CD4-positive, alpha-beta memory T cell (primary cell): ENCODE measurements at regions of chr15 and their contacts with region 1.

Region 1: GRCh38 chr15:45402162-45402954 is 24.0 kb upstream of the GATM start:
- DNase-seq: peak; percentile 91 to 97 (median 96)
- H3K4me3 ChIP-seq: peak overlapping the region; percentile 71 to 77
- H3K4me3 Mint-ChIP-seq: peak overlapping the region; percentile 91 to 99 (median 95)
- H3K27ac ChIP-seq: peak overlapping the region; percentile 89
- H3K27ac Mint-ChIP-seq: peak overlapping the region; percentile 97 to 99 (median 98)
- H3K4me1 ChIP-seq: peaks cover 32% of the 10 kb centered on the region
- H3K4me1 Mint-ChIP-seq: peaks cover 20 to 41% (median 32%) of the 10 kb centered on the region in 4 donors
- H3K27me3 ChIP-seq: no peaks in the 10 kb centered on the region
- H3K27me3 Mint-ChIP-seq: no peaks in the 10 kb centered on the region

Region 2: GRCh38 chr15:45126535-45127158 is 275.7 kb before region 1 on chr15:
- CTCF ChIA-PET with region 1: interaction called, 6 read pairs
- POLR2A ChIA-PET with region 1: interaction called, 3 read pairs
- intact Hi-C with region 1: loop called (anchors 1 kb)
- DNase-seq: peak in 4 of 5 donors; percentile 45 to 52 (median 48)
- H3K4me3 ChIP-seq: no peak overlapping the region
- H3K4me3 Mint-ChIP-seq: no peak overlapping the region
- H3K27ac ChIP-seq: no peak overlapping the region
- H3K27ac Mint-ChIP-seq: no peak overlapping the region
- H3K4me1 ChIP-seq: no peaks in the 10 kb centered on the region
- H3K4me1 Mint-ChIP-seq: peaks cover 0 to 8% (median 4%) of the 10 kb centered on the region in 4 donors
- H3K27me3 ChIP-seq: peaks cover 25% of the 10 kb centered on the region
- H3K27me3 Mint-ChIP-seq: peaks cover 34 to 51% of the 10 kb centered on the region in 2 donors

Region 3: GRCh38 chr15:45139276-45139741 is 263.0 kb before region 1 on chr15:
- CTCF ChIA-PET with region 1: no interaction called
- POLR2A ChIA-PET with region 1: no interaction called
- intact Hi-C with region 1: no loop called
- DNase-seq: no peak
- H3K4me3 ChIP-seq: no peak overlapping the region
- H3K4me3 Mint-ChIP-seq: no peak overlapping the region
- H3K27ac ChIP-seq: no peak overlapping the region
- H3K27ac Mint-ChIP-seq: no peak overlapping the region
- H3K4me1 ChIP-seq: peaks cover 11% of the 10 kb centered on the region
- H3K4me1 Mint-ChIP-seq: peaks cover 4 to 17% (median 11%) of the 10 kb centered on the region in 4 donors
- H3K27me3 ChIP-seq: peaks cover 13% of the 10 kb centered on the region
- H3K27me3 Mint-ChIP-seq: peaks cover 15 to 18% of the 10 kb centered on the region in 2 donors

Region 4: GRCh38 chr15:45198337-45199135 is 203.8 kb before region 1 on chr15:
- CTCF ChIA-PET with region 1: interaction called, 35 read pairs
- POLR2A ChIA-PET with region 1: interaction called, 73 read pairs
- intact Hi-C with region 1: loop called (anchors 1 kb)
- DNase-seq: peak; percentile 97 to 98 (median 98)
- H3K4me3 ChIP-seq: peak overlapping the region; percentile 72 to 97
- H3K4me3 Mint-ChIP-seq: no peak overlapping the region
- H3K27ac ChIP-seq: peak overlapping the region; percentile 86
- H3K27ac Mint-ChIP-seq: no peak overlapping the region
- H3K4me1 ChIP-seq: peaks cover 18% of the 10 kb centered on the region
- H3K4me1 Mint-ChIP-seq: peaks cover 0 to 19% (median 10%) of the 10 kb centered on the region in 4 donors
- H3K27me3 ChIP-seq: no peaks in the 10 kb centered on the region
- H3K27me3 Mint-ChIP-seq: peaks cover 0 to 9% of the 10 kb centered on the region in 2 donors

Region 5: GRCh38 chr15:45307230-45307924 is 95.0 kb before region 1 on chr15:
- CTCF ChIA-PET with region 1: interaction called, 5 read pairs
- POLR2A ChIA-PET with region 1: no interaction called
- intact Hi-C with region 1: loop called (anchors 1 kb)
- DNase-seq: peak in 1 of 5 donors; percentile 1
- H3K4me3 ChIP-seq: no peak overlapping the region
- H3K4me3 Mint-ChIP-seq: peak overlapping the region in 6 of 8 donors; percentile 53 to 81 (median 68)
- H3K27ac ChIP-seq: no peak overlapping the region
- H3K27ac Mint-ChIP-seq: no peak overlapping the region
- H3K4me1 ChIP-seq: peaks cover 5% of the 10 kb centered on the region
- H3K4me1 Mint-ChIP-seq: peaks cover 4 to 10% (median 6%) of the 10 kb centered on the region in 4 donors
- H3K27me3 ChIP-seq: peaks cover 4% of the 10 kb centered on the region
- H3K27me3 Mint-ChIP-seq: peaks cover 15 to 28% of the 10 kb centered on the region in 2 donors

Region 6: GRCh38 chr15:45457641-45458433 is 55.5 kb after region 1 on chr15:
- CTCF ChIA-PET with region 1: interaction called, 8 read pairs
- POLR2A ChIA-PET with region 1: interaction called, 4 read pairs
- intact Hi-C with region 1: loop called (anchors 1 kb)
- DNase-seq: peak; percentile 79 to 84 (median 81)
- H3K4me3 ChIP-seq: peak overlapping the region; percentile 21 to 51
- H3K4me3 Mint-ChIP-seq: peak overlapping the region; percentile 86 to 94 (median 88)
- H3K27ac ChIP-seq: peak overlapping the region; percentile 61
- H3K27ac Mint-ChIP-seq: peak overlapping the region; percentile 89 to 98 (median 96)
- H3K4me1 ChIP-seq: peaks cover 48% of the 10 kb centered on the region
- H3K4me1 Mint-ChIP-seq: peaks cover 34 to 51% (median 41%) of the 10 kb centered on the region in 4 donors
- H3K27me3 ChIP-seq: no peaks in the 10 kb centered on the region
- H3K27me3 Mint-ChIP-seq: no peaks in the 10 kb centered on the region

Region 7: GRCh38 chr15:46091860-46092450 is 689.6 kb after region 1 on chr15:
- CTCF ChIA-PET with region 1: no interaction called
- POLR2A ChIA-PET with region 1: no interaction called
- intact Hi-C with region 1: no loop called
- DNase-seq: no peak
- H3K4me3 ChIP-seq: no peak overlapping the region
- H3K4me3 Mint-ChIP-seq: no peak overlapping the region
- H3K27ac ChIP-seq: no peak overlapping the region
- H3K27ac Mint-ChIP-seq: no peak overlapping the region
- H3K4me1 ChIP-seq: no peaks in the 10 kb centered on the region
- H3K4me1 Mint-ChIP-seq: no peaks in the 10 kb centered on the region
- H3K27me3 ChIP-seq: no peaks in the 10 kb centered on the region
- H3K27me3 Mint-ChIP-seq: peaks cover 0 to 4% of the 10 kb centered on the region in 2 donors